HCT116 (cell line): ENCODE measurements at regions of chr10 and their contacts with region 1.

Region 1: DNA sequence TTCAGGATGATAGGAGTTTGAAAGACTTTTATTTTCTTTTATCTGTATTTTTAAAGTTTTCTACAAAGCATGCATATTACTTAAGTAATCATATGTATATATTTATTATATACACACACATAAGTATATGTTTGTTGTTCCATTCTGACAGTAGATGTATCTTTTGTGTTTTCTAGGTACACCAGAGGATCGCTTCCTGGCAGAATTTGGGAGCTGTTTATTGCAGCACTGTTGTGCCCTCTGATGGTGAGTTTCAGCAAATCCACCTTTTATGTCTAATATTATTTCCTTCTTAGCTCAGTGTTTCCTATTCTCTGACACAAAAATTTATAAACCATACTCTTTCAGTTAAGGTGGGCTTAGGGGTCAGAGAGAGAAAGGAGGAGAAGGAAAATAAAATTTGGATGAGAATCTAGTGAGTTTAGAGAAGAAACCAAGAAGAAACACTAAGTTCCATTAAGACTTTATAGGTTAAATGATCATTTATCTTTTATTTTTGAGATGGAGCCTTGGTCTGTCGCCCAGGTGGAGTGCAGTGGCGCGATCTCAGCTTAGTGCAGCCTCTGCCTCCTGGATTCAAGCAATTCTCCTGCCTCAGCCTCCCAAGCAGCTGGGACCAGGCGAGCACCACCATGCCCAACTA is 59.2 kb upstream of the OIT3 start:
- DNase-seq: peak; percentile 48
- ATAC-seq: peak; percentile 71
- H3K4me3 ChIP-seq: no peak overlapping the region
- H3K27ac ChIP-seq: no peak overlapping the region
- H3K4me1 ChIP-seq: no peaks in the 10 kb centered on the region
- H3K27me3 ChIP-seq: no peaks in the 10 kb centered on the region
- CTCF ChIP-seq: peak; percentile 52 to 83 (median 65)
- POLR2A ChIP-seq: no peak
- RAD21 ChIP-seq: peak; percentile 90

Region 2: DNA sequence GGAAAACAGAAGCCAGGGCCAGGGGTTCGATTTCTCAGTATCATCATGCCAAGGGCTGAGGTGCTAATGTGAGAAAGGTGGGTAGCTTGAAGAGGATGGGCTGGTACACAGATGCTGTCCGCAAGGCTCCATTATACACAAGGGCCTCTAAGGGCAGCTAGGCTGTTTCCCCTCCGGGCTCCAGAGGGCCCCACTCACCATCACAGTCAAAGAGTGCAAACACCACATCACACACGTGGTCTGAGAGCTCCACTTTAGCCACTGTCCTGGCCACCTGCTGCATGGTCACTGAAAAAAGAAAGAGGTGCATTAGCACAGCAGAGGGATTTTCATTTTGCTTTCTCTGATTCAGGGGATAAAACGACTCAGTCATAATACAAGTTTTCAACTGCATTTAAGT is 458.7 kb before region 1 on chr10:
- CTCF ChIA-PET with region 1: interaction called, 23 read pairs
- POLR2A ChIA-PET with region 1: no interaction called
- RAD21 ChIA-PET with region 1: interaction called, 4 to 6 read pairs
- intact Hi-C with region 1: no loop called
- DNase-seq: no peak
- ATAC-seq: peak; percentile 97
- H3K4me3 ChIP-seq: no peak overlapping the region
- H3K27ac ChIP-seq: no peak overlapping the region
- H3K4me1 ChIP-seq: no peaks in the 10 kb centered on the region
- H3K27me3 ChIP-seq: no peaks in the 10 kb centered on the region
- CTCF ChIP-seq: peak; percentile 20 to 38 (median 32); a peak in 3 of 6 replicates
- POLR2A ChIP-seq: no peak
- RAD21 ChIP-seq: peak; percentile 62

Region 3: GRCh38 chr10:73044378-73045285 is 210.3 kb after region 1 on chr10:
- CTCF ChIA-PET with region 1: no interaction called
- POLR2A ChIA-PET with region 1: no interaction called
- RAD21 ChIA-PET with region 1: no interaction called
- intact Hi-C with region 1: no loop called
- DNase-seq: no peak
- ATAC-seq: no peak
- H3K4me3 ChIP-seq: no peak overlapping the region
- H3K27ac ChIP-seq: no peak overlapping the region
- H3K4me1 ChIP-seq: peaks cover 6% of the 10 kb centered on the region in 2 experiments; a peak in 2 of 4 replicates
- H3K27me3 ChIP-seq: no peaks in the 10 kb centered on the region
- CTCF ChIP-seq: no peak
- POLR2A ChIP-seq: no peak
- RAD21 ChIP-seq: no peak

Region 4: GRCh38 chr10:73168465-73168803 is 334.1 kb after region 1 on chr10:
- CTCF ChIA-PET with region 1: no interaction called
- POLR2A ChIA-PET with region 1: no interaction called
- RAD21 ChIA-PET with region 1: no interaction called
- intact Hi-C with region 1: no loop called
- DNase-seq: no peak
- ATAC-seq: peak; percentile 40; the same call in 1 of the 2 replicates
- H3K4me3 ChIP-seq: peak overlapping the region; percentile 73 to 99
- H3K27ac ChIP-seq: peak overlapping the region; percentile 75
- H3K4me1 ChIP-seq: peaks cover 0 to 10% of the 10 kb centered on the region in 2 experiments; a peak in 1 of 4 replicates
- H3K27me3 ChIP-seq: no peaks in the 10 kb centered on the region
- CTCF ChIP-seq: no peak
- POLR2A ChIP-seq: no peak
- RAD21 ChIP-seq: no peak